KBM-7 (cell line): ENCODE measurements at regions of chr10 and their contacts with region 1.

Region 1: GRCh38 chr10:96374985-96375830 is 16.4 kb upstream of the OPALIN start:
- DNase-seq: peak; percentile 92

Region 2: DNA sequence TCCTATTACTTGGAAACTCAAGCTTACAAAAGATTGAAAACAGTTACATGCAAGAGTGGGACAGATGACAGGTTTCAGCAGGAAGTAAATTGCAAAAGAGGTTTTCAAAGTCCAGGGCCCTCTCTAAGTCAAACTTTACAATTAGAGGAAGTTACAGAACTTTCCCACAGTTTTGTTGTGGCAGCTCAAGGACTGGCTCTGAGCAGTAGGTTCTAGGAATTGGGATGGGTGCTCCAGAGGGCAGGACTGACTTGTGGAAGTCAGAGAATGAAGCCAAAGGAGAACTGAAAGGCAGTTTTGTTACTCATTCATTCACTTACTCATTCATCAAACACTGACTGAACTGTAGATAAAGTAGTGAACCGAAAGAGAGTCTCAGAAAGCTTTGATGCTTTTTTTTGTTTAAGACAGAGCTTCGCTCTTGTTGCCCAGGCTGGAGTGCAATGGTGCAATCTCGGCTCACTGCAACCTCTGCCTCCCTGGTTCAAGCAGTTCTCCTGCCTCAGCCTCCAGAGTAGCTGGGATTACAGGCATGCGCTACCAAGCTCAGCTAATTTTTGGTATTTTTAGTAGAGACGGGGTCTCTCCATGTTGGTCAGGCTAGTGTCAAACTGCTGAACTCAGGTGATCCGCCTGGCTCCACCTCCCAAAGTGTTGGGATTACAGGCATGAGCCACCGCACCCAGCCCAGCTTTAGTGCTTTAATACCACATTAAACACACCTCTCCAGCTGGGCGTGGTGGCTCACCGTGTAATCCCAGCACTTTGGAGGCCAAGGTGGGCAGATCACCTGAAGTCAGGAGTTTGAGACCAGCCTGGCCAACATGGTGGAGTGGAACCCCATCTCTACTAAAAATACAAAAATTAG is 398.6 kb before region 1 on chr10:
- in situ Hi-C with region 1: no loop called
- DNase-seq: no peak

Region 3: GRCh38 chr10:96244354-96244753 is 130.9 kb before region 1 on chr10:
- in situ Hi-C with region 1: no loop called
- DNase-seq: no peak

Region 4: DNA sequence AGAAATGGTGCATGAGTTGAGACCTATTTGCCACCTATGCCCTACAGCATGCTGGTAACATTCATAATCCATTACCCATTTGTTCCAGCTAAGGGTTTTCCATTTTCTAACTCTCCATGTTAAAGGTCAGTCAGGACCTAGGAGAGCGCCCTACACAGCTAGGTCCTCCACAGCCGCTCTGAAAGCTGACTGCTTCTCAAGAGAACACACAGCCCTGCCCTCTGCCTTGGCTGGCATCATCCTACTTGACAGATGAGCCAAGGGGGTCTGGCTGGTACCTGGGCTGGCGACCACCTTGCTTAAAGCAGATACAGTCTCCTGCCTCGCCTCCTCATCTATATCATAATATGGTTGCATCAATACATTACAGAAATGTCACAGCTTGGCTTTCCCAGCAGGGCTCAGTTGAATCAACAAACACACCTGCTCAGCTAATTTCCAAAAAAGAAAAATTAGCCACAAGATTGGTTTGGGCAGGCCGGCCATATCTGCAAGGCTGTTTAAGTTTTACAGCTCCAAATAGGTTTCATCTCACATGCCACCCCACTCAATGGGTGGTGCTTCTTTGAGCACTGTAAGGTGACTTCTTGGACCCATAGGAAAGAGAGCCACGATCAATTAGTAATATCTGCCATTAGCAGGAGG is 121.2 kb after region 1 on chr10:
- in situ Hi-C with region 1: loop called (anchors 25 kb)
- DNase-seq: no peak